ENCODE measurements at regions of chr15 and their contacts with region 1.

Region 1: GRCh38 chr15:39586387-39587171 is 5.7 kb downstream of the THBS1 start:
- DNase-seq: no peak
- ATAC-seq: no peak
- H3K4me3 ChIP-seq: no peak overlapping the region
- H3K27ac ChIP-seq: no peak overlapping the region
- H3K4me1 ChIP-seq: peaks cover 54% of the 10 kb centered on the region
- H3K27me3 ChIP-seq: no peaks in the 10 kb centered on the region
- CTCF ChIP-seq: no peak
- EP300 ChIP-seq: no peak
- POLR2A ChIP-seq: peak in 1 of 2 experiments; percentile 21; a peak in 1 of 4 replicates
- RAD21 ChIP-seq: no peak

Region 2: DNA sequence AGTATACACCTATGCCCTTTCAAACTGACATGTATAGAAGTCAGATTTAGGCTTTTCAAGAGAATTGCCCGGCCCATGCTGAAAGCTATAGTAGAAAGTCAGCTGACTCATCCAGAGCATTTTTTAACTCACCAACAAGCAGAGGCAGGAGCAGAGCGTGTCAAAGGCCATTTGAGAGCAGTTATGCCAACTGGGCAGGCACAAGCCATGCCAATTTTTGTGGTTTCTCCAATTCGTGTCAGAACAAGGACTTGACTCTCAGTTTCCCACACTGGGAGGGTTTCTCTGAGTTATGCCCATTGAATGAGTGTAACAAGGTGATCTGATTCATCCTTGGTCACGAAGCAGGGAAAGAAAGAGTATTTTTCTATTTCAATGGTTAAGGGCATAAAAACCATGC is 409.0 kb before region 1 on chr15:
- CTCF ChIA-PET with region 1: interaction called, 26 read pairs
- POLR2A ChIA-PET with region 1: interaction called, 50 read pairs
- in situ Hi-C with region 1: loop called (anchors 5 kb)
- intact Hi-C with region 1: loop called (anchors 2 kb)
- DNase-seq: no peak
- ATAC-seq: no peak
- H3K4me3 ChIP-seq: no peak overlapping the region
- H3K27ac ChIP-seq: no peak overlapping the region
- H3K4me1 ChIP-seq: peaks cover 40% of the 10 kb centered on the region
- H3K27me3 ChIP-seq: no peaks in the 10 kb centered on the region
- CTCF ChIP-seq: no peak
- EP300 ChIP-seq: no peak
- POLR2A ChIP-seq: no peak
- RAD21 ChIP-seq: no peak

Measured in HepG2 (cell line).